ENCODE measurements at regions of chr7 and their contacts with region 1.

Region 1: GRCh38 chr7:139340037-139340807 is 915 bp upstream of the FMC1 start:
- DNase-seq: peak; percentile 95
- ATAC-seq: peak; percentile 77
- H3K4me3 Mint-ChIP-seq: peak overlapping the region; percentile 96
- H3K27ac Mint-ChIP-seq: peak overlapping the region; percentile 100
- H3K4me1 Mint-ChIP-seq: peaks cover 41% of the 10 kb centered on the region
- H3K27me3 Mint-ChIP-seq: peaks cover 9% of the 10 kb centered on the region
- CTCF ChIP-seq: no peak

Region 2: GRCh38 chr7:138002096-138002827 is 1338.0 kb before region 1 on chr7:
- CTCF ChIA-PET with region 1: no interaction called
- POLR2A ChIA-PET with region 1: no interaction called
- intact Hi-C with region 1: loop called (anchors 5 kb)
- DNase-seq: peak; percentile 93
- ATAC-seq: peak; percentile 90
- H3K4me3 Mint-ChIP-seq: peak overlapping the region; percentile 98
- H3K27ac Mint-ChIP-seq: peak overlapping the region; percentile 90
- H3K4me1 Mint-ChIP-seq: peaks cover 37% of the 10 kb centered on the region
- H3K27me3 Mint-ChIP-seq: no peaks in the 10 kb centered on the region
- CTCF ChIP-seq: peak; percentile 94

Region 3: GRCh38 chr7:139109188-139109982 is 230.8 kb before region 1 on chr7 and contains the start of gene ZC3HAV1:
- CTCF ChIA-PET with region 1: no interaction called
- POLR2A ChIA-PET with region 1: no interaction called
- intact Hi-C with region 1: loop called (anchors 1 kb)
- DNase-seq: peak; percentile 73
- ATAC-seq: peak; percentile 76
- H3K4me3 Mint-ChIP-seq: peak within 1 kb of the TSS; percentile 90
- H3K27ac Mint-ChIP-seq: peak within 1 kb of the TSS; percentile 97
- H3K4me1 Mint-ChIP-seq: peaks cover 44% of the 10 kb centered on the region
- H3K27me3 Mint-ChIP-seq: no peaks in the 10 kb centered on the region
- CTCF ChIP-seq: no peak
- total RNA-seq, gene ZC3HAV1: 76.3 and 80.7 TPM in 2 replicates

Region 4: DNA sequence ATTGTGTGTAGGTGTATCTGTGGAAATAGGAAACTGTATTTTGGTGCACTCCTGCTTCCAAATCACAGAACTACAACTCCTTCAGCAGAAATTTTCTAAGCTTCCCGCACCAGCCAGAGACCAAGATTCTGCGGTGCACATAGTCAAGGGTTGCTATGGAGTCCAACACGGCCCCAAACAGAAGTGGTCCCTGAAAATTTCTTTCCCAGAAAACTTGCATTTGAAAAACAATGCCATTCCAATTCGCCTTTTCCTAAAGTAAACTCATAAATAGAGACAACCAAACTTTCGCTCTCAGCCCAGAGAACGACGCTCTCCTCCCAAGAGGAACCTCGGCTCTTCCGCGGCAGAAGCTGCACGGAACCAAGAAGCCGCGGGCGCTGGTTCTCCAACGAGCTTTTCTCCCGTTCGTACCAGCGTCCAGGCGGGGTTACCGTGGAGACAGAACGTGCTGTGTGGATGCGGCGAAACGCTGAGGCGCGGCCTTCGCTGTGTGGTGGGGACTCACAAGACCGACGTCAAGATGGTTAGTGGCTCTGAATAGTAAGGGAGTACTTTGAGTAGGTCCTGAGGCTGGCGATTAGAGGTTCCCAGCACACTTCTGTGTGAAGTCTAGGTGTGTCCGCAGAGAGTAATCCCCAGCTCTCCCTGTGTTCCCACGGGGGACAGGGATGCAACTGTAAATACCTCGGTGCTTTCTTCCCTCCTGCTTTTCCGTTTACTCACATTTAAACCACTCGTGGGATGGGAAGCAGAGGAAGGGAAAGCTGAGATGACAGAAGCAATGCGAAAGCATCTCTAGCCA is 206.7 kb before region 1 on chr7:
- CTCF ChIA-PET with region 1: interaction called, 3 read pairs
- POLR2A ChIA-PET with region 1: interaction called, 17 read pairs
- intact Hi-C with region 1: loop called (anchors 1 kb)
- DNase-seq: peak; percentile 77
- ATAC-seq: peak; percentile 98
- H3K4me3 Mint-ChIP-seq: peak overlapping the region; percentile 87
- H3K27ac Mint-ChIP-seq: peak overlapping the region; percentile 81
- H3K4me1 Mint-ChIP-seq: peaks cover 9% of the 10 kb centered on the region
- H3K27me3 Mint-ChIP-seq: no peaks in the 10 kb centered on the region
- CTCF ChIP-seq: no peak

Region 5: GRCh38 chr7:139359366-139360209 is 19.4 kb after region 1 on chr7 and contains the start of gene LUC7L2:
- CTCF ChIA-PET with region 1: interaction called, 5 read pairs
- POLR2A ChIA-PET with region 1: interaction called, 99 read pairs
- intact Hi-C with region 1: loop called (anchors 1 kb)
- DNase-seq: peak; percentile 97
- ATAC-seq: peak; percentile 78
- H3K4me3 Mint-ChIP-seq: peak within 1 kb of the TSS; percentile 98
- H3K27ac Mint-ChIP-seq: peak within 1 kb of the TSS; percentile 100
- H3K4me1 Mint-ChIP-seq: peaks cover 41% of the 10 kb centered on the region
- H3K27me3 Mint-ChIP-seq: no peaks in the 10 kb centered on the region
- CTCF ChIP-seq: no peak
- total RNA-seq, gene LUC7L2: 94.0 and 118 TPM in 2 replicates

Region 6: DNA sequence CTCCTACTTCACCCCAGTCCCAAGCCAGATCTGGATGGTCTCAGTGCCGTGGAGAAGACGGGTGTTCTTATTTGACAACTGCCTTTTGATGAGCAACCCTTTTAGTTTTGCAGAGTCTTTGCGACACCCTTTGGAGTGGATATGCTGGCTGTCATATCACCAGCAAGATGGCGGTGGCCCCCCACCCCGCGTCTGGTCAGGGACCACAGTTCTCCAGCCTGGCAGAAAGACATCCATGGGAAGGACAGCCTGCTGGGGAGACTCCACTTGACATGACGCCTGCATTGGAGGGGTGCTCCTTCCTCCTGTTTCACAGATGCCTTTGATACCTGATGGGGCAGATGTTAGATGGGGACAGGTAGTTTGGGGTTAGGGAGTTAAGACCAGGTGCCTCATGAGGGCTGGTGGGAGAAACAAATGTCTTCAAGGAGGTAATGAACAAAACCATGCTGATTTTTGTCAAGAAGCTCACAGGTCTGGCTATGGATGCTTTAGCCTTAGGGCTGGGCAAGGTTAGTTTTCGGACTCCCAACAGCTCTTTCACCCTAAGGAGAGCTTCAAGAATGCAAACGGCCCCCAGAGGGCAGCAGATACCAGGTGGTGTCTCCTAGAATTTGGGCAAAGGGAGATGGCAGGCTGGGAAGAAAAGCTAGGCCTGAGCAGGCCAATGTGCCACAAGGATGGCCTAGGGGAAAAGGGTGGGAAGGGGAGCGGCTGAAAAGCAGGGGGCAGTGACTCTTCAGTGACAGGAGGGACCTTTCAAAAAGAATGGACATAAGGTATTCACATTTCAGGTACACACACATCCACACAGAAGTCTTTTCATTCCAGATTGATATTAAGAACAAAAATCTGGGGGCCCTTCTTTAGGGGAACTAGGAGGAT is 278.5 kb after region 1 on chr7:
- CTCF ChIA-PET with region 1: no interaction called
- POLR2A ChIA-PET with region 1: no interaction called
- intact Hi-C with region 1: no loop called
- DNase-seq: no peak
- ATAC-seq: no peak
- H3K4me3 Mint-ChIP-seq: no peak overlapping the region
- H3K27ac Mint-ChIP-seq: no peak overlapping the region
- H3K4me1 Mint-ChIP-seq: no peaks in the 10 kb centered on the region
- H3K27me3 Mint-ChIP-seq: no peaks in the 10 kb centered on the region
- CTCF ChIP-seq: no peak

Region 7: GRCh38 chr7:139820089-139820488 is 479.9 kb after region 1 on chr7:
- CTCF ChIA-PET with region 1: no interaction called
- POLR2A ChIA-PET with region 1: no interaction called
- intact Hi-C with region 1: no loop called
- DNase-seq: no peak
- ATAC-seq: no peak
- H3K4me3 Mint-ChIP-seq: no peak overlapping the region
- H3K27ac Mint-ChIP-seq: no peak overlapping the region
- H3K4me1 Mint-ChIP-seq: no peaks in the 10 kb centered on the region
- H3K27me3 Mint-ChIP-seq: peaks cover 2% of the 10 kb centered on the region
- CTCF ChIP-seq: no peak

Region 8: DNA sequence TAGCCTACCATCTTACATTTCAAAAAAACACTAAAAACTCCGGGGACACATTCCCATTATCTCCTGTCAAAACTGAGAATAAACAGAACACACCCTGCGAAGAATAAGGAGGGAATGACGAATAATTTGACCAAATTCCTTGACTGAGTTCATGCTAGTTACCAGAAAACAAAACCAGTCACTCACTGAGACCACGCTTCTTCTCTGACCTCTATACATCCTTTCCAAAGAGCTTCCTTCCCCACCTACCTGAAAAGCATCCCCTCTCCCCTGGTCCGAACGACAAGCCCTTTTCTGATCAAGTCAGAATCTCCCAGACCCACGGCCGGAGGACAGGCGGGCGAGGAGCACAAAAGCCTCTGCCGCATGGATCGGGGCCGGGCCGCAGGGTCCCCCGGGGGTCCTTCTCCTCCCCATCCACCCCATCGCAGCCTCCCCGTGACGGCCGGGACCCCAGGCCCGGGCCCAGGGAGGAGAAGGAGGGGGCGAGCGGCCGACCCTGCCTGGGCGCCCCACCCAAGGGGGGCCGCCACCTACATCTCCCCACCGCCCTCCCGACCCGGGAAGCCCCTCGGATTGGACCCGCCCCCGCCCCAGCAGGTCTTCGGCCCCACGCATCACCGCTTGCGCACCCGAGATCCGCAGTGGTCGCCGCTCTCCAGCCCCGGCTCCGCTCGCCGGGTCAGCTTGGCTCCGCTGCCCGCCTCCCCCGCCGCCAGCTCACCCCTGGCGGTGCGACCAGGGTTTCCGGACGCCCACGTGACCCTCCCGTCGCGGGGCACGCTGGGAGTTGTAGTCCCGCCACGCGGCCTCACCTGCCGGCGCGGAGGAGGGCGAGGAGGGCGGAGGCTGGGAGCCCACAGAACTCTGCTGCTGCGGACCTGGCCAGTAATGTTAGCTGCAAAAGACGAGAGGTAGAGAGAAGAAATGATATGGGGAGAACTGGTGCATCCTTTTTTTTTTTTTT is 1057.8 kb after region 1 on chr7 and contains the start of gene SLC37A3:
- CTCF ChIA-PET with region 1: no interaction called
- POLR2A ChIA-PET with region 1: no interaction called
- intact Hi-C with region 1: loop called (anchors 5 kb)
- DNase-seq: peak; percentile 85
- ATAC-seq: peak; percentile 96
- H3K4me3 Mint-ChIP-seq: peak within 1 kb of the TSS; percentile 88
- H3K27ac Mint-ChIP-seq: peak within 1 kb of the TSS; percentile 65
- H3K4me1 Mint-ChIP-seq: peaks cover 8% of the 10 kb centered on the region
- H3K27me3 Mint-ChIP-seq: peaks cover 1% of the 10 kb centered on the region
- CTCF ChIP-seq: no peak
- total RNA-seq, gene SLC37A3: 10.6 and 12.4 TPM in 2 replicates

Region 9: DNA sequence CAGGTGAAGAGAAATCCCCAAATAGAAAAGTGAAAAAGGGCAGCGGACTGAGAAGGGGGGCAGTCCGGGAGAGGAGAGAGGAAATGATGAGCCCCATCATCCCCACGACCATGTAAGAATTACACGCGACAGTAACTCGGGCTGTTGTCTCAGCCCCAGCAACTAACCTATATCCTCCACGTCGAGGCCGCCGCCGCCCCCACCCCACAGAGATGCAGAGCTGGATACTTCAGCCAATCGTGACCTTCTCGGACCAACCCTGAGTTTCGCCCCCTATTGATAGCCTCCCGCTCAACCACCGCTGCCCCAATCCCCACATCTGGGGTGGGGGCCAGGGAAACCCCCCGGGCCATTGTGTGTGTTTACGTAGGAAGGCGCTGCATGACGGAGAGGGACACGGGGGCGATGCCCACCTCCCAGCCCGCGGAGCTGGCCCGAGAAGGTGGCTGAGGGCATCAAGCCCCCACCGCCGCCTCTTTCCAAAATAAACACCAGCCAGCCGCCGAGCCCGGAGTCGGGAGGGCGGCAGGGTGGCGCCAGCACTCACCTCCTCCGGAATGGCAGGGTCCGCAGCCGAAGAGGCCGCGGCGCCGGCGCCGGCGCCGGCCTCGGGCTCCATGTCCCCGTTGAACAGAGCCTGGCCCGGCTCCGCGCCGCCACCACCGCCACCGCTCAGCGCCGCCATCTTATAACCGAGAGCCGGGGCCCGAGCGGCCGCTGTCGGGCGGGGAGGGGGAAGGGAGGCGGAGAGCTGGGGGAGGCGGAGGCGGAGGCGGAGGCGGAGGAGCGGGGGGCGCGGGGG is 1584.0 kb after region 1 on chr7:
- CTCF ChIA-PET with region 1: no interaction called
- POLR2A ChIA-PET with region 1: no interaction called
- intact Hi-C with region 1: loop called (anchors 1 kb)
- DNase-seq: peak; percentile 71
- ATAC-seq: peak; percentile 75
- H3K4me3 Mint-ChIP-seq: no peak overlapping the region
- H3K27ac Mint-ChIP-seq: no peak overlapping the region
- H3K4me1 Mint-ChIP-seq: peaks cover 28% of the 10 kb centered on the region
- H3K27me3 Mint-ChIP-seq: no peaks in the 10 kb centered on the region
- CTCF ChIP-seq: no peak

Measured in activated B cell treated with CpG ODN at 0.5 μM for 24 hours (primary cell).